Psoas muscle (tissue), 8 donors: ENCODE measurements at regions of chr11 and their contacts with region 1.

Region 1: GRCh38 chr11:46352063-46352841 is 5.0 kb downstream of the DGKZ start:
- DNase-seq: peak; percentile 73 to 88
- ATAC-seq: peak; percentile 75 to 84 (median 78)
- H3K4me3 ChIP-seq: peak overlapping the region; percentile 50
- H3K27ac ChIP-seq: peak overlapping the region; percentile 69
- H3K4me1 ChIP-seq: peaks cover 33% of the 10 kb centered on the region
- H3K27me3 ChIP-seq: no peaks in the 10 kb centered on the region
- CTCF ChIP-seq: peak; percentile 99

Region 2: GRCh38 chr11:45285930-45286632 is 1066.2 kb before region 1 on chr11 and contains the start of gene SYT13:
- intact Hi-C with region 1: no loop called
- DNase-seq: no peak
- ATAC-seq: peak in 1 of 4 donors; percentile 33
- H3K4me3 ChIP-seq: peak within 1 kb of the TSS; percentile 4
- H3K27ac ChIP-seq: no peak within 1 kb of the TSS
- H3K4me1 ChIP-seq: no peaks in the 10 kb centered on the region
- H3K27me3 ChIP-seq: peaks cover 0 to 73% (median 18%) of the 10 kb centered on the region in 3 donors
- CTCF ChIP-seq: no peak
- total RNA-seq, gene SYT13: 0.05 to 0.22 (median 0.11) TPM in 3 of 4 donors, not detected in the other

Region 3: GRCh38 chr11:45500451-45500850 is 851.8 kb before region 1 on chr11:
- intact Hi-C with region 1: no loop called
- DNase-seq: no peak
- ATAC-seq: no peak
- H3K4me3 ChIP-seq: no peak overlapping the region
- H3K27ac ChIP-seq: no peak overlapping the region
- H3K4me1 ChIP-seq: no peaks in the 10 kb centered on the region
- H3K27me3 ChIP-seq: peaks cover 0 to 26% (median 8%) of the 10 kb centered on the region in 3 donors
- CTCF ChIP-seq: no peak

Region 4: DNA sequence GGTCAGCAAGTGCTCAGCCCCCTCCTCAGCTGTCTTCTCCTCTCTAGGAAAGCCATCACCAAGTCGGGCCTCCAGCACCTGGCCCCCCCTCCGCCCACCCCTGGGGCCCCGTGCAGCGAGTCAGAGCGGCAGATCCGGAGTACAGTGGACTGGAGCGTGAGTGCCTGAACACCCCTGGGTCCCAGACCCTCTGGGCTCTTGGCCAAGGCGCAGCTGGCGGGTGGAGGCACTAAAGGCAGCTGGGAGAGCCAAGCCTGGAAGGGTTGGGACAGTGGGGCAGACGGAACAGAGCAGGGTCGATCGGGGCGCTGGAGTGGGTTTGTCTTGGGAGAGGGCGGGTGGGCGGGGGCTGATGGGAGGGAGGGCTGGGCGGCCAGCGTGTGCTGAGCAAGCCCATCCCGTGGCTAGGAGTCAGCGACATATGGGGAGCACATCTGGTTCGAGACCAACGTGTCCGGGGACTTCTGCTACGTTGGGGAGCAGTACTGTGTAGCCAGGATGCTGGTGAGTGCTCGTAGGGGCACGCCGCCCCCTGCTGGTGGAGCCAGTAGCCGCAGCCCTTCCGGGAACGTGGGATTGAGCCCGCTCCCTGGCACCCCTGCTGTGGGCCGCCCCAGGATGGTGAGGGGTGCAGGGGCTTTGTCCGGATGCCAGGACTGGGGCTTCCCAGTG is 15.1 kb after region 1 on chr11:
- intact Hi-C with region 1: loop called (anchors 1 to 2 kb)
- DNase-seq: peak; percentile 78 to 86
- ATAC-seq: peak; percentile 35 to 52 (median 46)
- H3K4me3 ChIP-seq: no peak overlapping the region
- H3K27ac ChIP-seq: peak overlapping the region; percentile 58
- H3K4me1 ChIP-seq: peaks cover 44% of the 10 kb centered on the region
- H3K27me3 ChIP-seq: no peaks in the 10 kb centered on the region
- CTCF ChIP-seq: peak; percentile 91

Region 5: DNA sequence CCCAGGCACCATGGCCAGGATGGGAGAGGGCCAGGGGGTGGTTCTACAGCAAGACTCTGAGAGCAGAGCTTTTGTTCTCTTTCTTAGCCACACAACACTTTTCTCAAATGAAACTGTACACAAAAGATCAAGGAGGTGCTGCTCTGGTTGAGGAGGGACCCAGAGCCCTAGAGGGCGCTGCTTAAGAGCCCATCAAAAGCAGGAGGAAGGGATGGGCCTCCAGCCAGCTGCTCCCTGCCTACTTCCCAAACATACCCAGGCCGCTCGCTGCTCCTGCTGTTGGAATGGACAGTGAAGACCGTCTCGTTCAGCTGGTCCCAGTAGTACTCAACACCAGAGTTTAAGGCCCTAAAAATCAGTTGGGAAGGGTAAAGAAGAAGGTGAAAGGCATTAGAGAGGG is 57.8 kb after region 1 on chr11:
- intact Hi-C with region 1: no loop called
- DNase-seq: no peak
- ATAC-seq: no peak
- H3K4me3 ChIP-seq: no peak overlapping the region
- H3K27ac ChIP-seq: no peak overlapping the region
- H3K4me1 ChIP-seq: no peaks in the 10 kb centered on the region
- H3K27me3 ChIP-seq: no peaks in the 10 kb centered on the region
- CTCF ChIP-seq: no peak

Region 6: DNA sequence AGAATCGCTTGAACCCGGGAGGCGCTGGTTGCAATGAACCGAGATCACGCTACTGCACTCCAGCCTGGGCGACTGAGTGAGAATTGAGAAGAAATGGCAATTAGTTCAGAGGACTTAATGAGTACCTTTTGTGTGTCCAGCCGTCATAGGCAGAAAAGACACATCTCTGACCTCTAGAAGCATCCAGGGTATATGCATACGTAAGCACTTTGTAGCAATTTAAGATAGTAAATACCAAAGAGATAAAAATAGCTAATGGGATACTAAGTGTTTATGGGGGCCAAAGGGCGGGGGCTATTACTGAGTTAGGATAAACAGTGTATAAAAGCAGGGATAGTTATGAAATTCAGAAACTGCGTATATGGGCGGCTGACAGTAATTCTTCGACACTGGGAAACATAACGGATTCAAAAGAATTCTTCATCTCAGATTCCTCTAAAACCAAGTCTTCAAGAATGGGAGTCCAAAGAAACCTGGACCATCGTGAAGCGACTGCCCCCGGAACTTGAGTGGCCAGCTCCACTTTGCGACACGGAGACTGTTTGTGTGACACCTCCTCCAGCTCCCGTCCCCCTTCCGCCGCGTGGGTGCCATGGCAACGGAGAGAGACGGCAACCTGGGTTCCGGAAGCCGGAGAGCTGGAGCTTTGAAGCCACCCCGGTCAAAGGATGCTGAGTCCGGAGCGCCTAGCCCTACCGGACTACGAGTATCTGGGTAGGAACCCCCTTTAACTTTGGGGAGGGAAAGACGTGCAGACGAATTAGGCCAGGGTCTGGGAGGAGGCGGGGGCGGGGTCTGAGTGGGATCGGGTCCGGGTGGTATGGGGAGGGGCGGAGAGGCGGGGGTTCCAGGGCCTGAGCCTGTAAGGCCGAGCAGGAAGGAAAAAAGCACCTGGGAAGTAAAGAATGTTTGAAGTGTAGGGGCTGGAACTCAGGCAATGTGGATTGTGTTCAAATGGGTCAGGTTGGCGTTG is 584.2 kb after region 1 on chr11 and contains the start of gene CSTPP1:
- intact Hi-C with region 1: loop called in 1 of 2 experiments (anchors 5 kb)
- DNase-seq: peak; percentile 94 to 97
- ATAC-seq: peak; percentile 96 to 99 (median 99)
- H3K4me3 ChIP-seq: peak within 1 kb of the TSS; percentile 76
- H3K27ac ChIP-seq: no peak within 1 kb of the TSS
- H3K4me1 ChIP-seq: no peaks in the 10 kb centered on the region
- H3K27me3 ChIP-seq: peaks cover 0 to 4% (median 0%) of the 10 kb centered on the region in 3 donors
- CTCF ChIP-seq: no peak
- total RNA-seq, gene CSTPP1: 6.1 to 10.0 (median 7.7) TPM